ENCODE measurements at regions of chr3 and their contacts with region 1.

Region 1: DNA sequence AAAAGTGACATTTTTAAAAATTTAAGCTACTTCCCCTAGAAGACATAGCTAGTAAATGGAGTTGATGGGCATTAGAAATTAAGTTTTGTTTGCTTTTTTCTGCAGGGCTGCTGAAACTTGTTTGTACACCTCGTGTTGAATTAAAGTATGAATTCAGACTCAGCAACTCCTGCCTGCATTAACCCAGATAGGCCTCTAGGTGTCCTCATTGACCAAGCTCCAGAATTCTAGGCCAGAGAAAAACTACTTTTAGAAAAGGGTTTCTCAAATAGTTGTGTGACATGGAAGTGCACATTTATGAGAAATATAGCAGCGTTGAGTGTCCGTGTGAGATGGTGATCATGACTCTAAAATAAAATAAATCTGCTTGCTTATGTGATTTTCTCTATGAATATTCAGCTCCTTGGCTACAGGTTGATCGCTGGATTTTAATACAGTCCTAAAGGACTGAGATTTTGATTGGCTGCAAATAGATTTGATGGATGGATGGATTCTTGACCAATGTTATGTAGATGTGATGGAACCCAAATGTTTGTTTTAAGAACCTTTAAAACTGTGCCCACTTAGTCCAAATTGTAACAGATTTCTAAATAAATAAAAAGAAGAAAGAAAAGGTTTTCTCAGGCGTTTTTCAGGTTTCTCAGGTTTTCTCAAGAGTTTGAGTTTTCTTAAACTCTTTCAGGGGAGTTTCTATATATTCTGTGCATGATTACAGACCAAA is 39.4 kb upstream of the LMOD3 start:
- H3K4me3 Mint-ChIP-seq: no peak overlapping the region
- H3K27ac Mint-ChIP-seq: no peak overlapping the region
- H3K4me1 Mint-ChIP-seq: no peaks in the 10 kb centered on the region
- H3K27me3 Mint-ChIP-seq: no peaks in the 10 kb centered on the region

Region 2: GRCh38 chr3:69306239-69307185 is 144.8 kb after region 1 on chr3:
- intact Hi-C with region 1: loop called (anchors 5 kb)
- H3K4me3 Mint-ChIP-seq: no peak overlapping the region
- H3K27ac Mint-ChIP-seq: peak overlapping the region; percentile 51
- H3K4me1 Mint-ChIP-seq: peaks cover 16% of the 10 kb centered on the region
- H3K27me3 Mint-ChIP-seq: no peaks in the 10 kb centered on the region